Astrocyte of the spinal cord (primary cell): ENCODE measurements at regions of chr3 and their contacts with region 1.

Region 1: GRCh38 chr3:186540221-186540834 is 3.9 kb downstream of the CRYGS start:
- DNase-seq: peak; percentile 82
- H3K4me3 ChIP-seq: no peak overlapping the region
- CTCF ChIP-seq: peak; percentile 46

Region 2: GRCh38 chr3:185976977-185977678 is 563.2 kb before region 1 on chr3:
- in situ Hi-C with region 1: loop called (anchors 25 kb)
- DNase-seq: peak; percentile 72
- H3K4me3 ChIP-seq: no peak overlapping the region
- CTCF ChIP-seq: peak; percentile 94

Region 3: DNA sequence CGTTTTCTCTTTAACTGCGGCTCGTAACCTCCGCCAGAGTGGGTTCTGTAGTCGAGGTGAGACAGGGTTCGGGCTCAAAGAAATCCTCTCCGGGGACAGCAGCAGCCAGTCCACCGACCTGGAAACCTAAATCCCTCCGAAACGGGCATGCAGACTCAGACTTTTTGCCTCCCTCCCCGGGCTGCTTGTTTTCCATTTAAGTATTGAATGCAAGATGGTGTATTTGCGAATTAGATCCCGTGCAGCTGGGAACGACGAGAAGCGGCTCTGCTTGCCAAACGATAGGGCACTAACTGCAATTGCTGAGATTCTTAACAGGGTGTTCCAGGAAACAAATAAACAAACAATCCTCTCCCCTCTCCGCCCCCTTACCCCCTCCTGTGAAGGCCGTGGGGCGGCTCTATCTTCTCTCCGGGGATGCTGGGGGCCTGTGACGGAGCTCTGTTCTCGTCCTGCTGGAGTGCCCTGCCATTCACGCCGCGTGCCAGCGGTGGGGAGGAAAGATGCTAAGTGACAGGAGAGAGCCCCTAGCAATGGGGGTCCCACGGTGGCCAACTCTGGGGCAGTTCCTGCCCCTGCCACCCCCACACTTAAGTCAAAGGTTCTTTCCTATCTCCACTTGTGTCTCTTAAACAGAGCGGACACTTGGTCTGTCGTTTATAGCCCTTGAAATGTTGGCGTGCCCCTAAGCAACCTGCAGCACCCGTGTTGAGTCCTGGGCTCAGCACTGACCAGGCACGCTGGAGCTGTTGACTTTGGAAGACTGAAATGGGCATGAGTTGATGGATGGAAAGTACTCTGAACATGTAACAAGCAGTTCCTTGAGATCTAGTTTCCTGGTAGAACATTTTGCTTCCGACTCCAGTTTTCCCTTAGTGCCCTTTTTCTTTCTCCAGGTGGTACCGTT is 430.2 kb before region 1 on chr3:
- in situ Hi-C with region 1: no loop called
- DNase-seq: no peak
- H3K4me3 ChIP-seq: peak overlapping the region; percentile 59
- CTCF ChIP-seq: no peak

Region 4: DNA sequence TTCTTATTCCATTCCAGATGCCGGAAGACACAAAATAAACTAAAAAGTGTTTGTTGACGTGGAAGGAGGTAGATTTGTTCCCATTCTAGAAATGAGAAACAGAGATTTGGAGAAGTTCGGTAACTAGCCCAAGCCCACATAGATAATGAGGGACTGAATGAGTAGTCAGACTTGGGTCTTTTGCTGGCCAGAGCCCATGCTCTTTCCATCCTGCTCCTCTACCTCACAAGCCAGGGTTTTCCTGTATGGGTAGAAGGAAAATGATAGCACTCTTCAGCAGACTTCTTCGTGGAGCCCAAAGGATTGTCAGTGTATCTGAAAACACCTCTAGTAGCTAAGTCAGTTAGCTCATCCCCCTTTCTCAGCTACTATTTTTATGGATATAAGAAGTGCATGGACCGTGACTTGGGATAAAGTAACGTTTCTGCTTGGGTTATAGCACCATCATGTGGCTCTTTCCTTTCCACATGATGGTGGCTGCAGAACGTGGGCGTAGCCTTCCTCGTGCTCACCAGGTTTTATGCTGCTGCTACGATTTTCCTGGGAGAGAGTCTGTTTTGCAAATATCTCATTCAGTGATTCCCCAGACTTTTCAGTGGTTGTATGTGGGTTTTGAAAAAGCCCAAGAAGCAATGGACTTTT is 262.9 kb before region 1 on chr3:
- in situ Hi-C with region 1: loop called (anchors 25 kb)
- DNase-seq: peak; percentile 67
- H3K4me3 ChIP-seq: no peak overlapping the region
- CTCF ChIP-seq: peak; percentile 55